GM12878 (cell line): ENCODE measurements at regions of chr17 and their contacts with region 1.

Region 1: DNA sequence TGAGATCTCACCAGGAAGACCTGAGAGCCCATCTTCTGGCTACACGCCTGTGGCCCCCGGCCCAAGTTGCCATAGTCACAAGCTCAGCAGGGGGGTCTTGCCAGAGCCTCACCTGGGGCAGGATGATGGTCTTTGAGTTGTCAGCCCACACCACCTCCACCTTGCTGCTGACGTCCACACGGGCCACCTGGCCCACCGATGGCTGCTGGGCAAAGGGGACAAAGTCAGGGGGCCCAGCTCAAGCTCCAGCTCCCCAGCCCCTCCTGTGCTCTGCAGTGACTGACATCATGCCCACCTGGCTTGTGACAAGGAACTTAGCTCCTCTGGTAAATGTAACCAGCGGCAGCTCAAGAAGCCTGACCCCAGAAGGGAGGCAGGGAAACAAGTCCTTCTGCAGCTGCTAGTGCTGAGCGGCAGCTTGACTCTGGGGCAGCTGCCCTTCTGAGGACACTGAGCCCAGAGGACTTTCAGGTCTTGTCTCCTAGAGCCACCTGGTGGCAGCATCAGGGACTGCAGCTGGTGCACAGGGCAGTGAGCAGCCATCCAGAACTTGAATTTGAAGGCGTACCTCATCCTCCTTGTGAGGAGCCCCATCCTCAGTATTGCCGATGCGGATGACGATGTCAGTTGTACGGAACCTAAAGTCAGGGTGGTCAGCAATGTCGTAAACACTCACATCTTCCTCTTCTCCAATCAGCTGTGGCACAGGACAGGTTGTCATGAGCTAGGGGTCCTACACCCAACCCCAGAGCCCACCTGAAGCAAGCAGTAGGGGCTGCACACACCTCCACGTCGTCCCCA is 13.5 kb downstream of the SPHK1 start:
- DNase-seq: peak; percentile 30
- ATAC-seq: peak; percentile 98
- H3K4me3 ChIP-seq: no peak overlapping the region
- H3K27ac ChIP-seq: no peak overlapping the region
- H3K4me1 ChIP-seq: no peaks in the 10 kb centered on the region
- H3K27me3 ChIP-seq: no peaks in the 10 kb centered on the region
- CTCF ChIP-seq: peak; percentile 96 to 98 (median 96); a peak in 5 of 6 replicates
- EP300 ChIP-seq: no peak
- POLR2A ChIP-seq: no peak; the same call in 1 of the 2 replicates
- RAD21 ChIP-seq: peak; percentile 76

Region 2: GRCh38 chr17:75689441-75689873 is 708.4 kb before region 1 on chr17:
- CTCF ChIA-PET with region 1: no interaction called
- POLR2A ChIA-PET with region 1: no interaction called
- RAD21 ChIA-PET with region 1: no interaction called
- SMC1A ChIA-PET with region 1: no interaction called
- in situ Hi-C with region 1: no loop called
- intact Hi-C with region 1: no loop called
- DNase-seq: peak; percentile 60
- ATAC-seq: peak; percentile 53
- H3K4me3 ChIP-seq: 0 out of 2 replicates have a peak overlapping the region, but pooled peaks have one; percentile 3
- H3K27ac ChIP-seq: peak overlapping the region; percentile 92
- H3K4me1 ChIP-seq: peaks cover 53% of the 10 kb centered on the region
- H3K27me3 ChIP-seq: no peaks in the 10 kb centered on the region
- CTCF ChIP-seq: no peak
- EP300 ChIP-seq: no peak
- POLR2A ChIP-seq: no peak
- RAD21 ChIP-seq: no peak

Region 3: GRCh38 chr17:76353599-76354316 is 44.1 kb before region 1 on chr17 and contains the start of gene PRPSAP1:
- CTCF ChIA-PET with region 1: interaction called, 11 read pairs
- POLR2A ChIA-PET with region 1: no interaction called
- RAD21 ChIA-PET with region 1: interaction called, 6 read pairs
- SMC1A ChIA-PET with region 1: interaction called, 8 read pairs
- in situ Hi-C with region 1: no loop called
- intact Hi-C with region 1: no loop called
- DNase-seq: peak; percentile 72
- ATAC-seq: peak; percentile 98
- H3K4me3 ChIP-seq: peak within 1 kb of the TSS; percentile 66
- H3K27ac ChIP-seq: peak within 1 kb of the TSS; percentile 91
- H3K4me1 ChIP-seq: peaks cover 13% of the 10 kb centered on the region
- H3K27me3 ChIP-seq: no peaks in the 10 kb centered on the region
- CTCF ChIP-seq: peak in 1 of 3 experiments; percentile 28; a peak in 1 of 6 replicates
- EP300 ChIP-seq: 0 out of 4 replicates have a peak, but pooled peaks of 1 of the 2 experiments have one; percentile 13
- POLR2A ChIP-seq: peak; percentile 99
- RAD21 ChIP-seq: no peak
- polyA plus RNA-seq, gene PRPSAP1: 26.9 to 34.7 TPM

Region 4: GRCh38 chr17:76384222-76384986 is 13.5 kb before region 1 on chr17 and contains the start of gene SPHK1:
- CTCF ChIA-PET with region 1: interaction called, 45 read pairs
- POLR2A ChIA-PET with region 1: interaction called, 4 read pairs
- RAD21 ChIA-PET with region 1: interaction called, 9 read pairs
- SMC1A ChIA-PET with region 1: interaction called, 6 read pairs
- in situ Hi-C with region 1: no loop called
- intact Hi-C with region 1: no loop called
- DNase-seq: no peak
- ATAC-seq: peak; percentile 88
- H3K4me3 ChIP-seq: peak within 1 kb of the TSS; percentile 75
- H3K27ac ChIP-seq: no peak within 1 kb of the TSS
- H3K4me1 ChIP-seq: peaks cover 24% of the 10 kb centered on the region
- H3K27me3 ChIP-seq: peaks cover 2 to 6% of the 10 kb centered on the region in 2 experiments; a peak in 2 of 4 replicates
- CTCF ChIP-seq: no peak
- EP300 ChIP-seq: no peak
- POLR2A ChIP-seq: no peak
- RAD21 ChIP-seq: no peak
- polyA plus RNA-seq, gene SPHK1: not detected

Region 5: DNA sequence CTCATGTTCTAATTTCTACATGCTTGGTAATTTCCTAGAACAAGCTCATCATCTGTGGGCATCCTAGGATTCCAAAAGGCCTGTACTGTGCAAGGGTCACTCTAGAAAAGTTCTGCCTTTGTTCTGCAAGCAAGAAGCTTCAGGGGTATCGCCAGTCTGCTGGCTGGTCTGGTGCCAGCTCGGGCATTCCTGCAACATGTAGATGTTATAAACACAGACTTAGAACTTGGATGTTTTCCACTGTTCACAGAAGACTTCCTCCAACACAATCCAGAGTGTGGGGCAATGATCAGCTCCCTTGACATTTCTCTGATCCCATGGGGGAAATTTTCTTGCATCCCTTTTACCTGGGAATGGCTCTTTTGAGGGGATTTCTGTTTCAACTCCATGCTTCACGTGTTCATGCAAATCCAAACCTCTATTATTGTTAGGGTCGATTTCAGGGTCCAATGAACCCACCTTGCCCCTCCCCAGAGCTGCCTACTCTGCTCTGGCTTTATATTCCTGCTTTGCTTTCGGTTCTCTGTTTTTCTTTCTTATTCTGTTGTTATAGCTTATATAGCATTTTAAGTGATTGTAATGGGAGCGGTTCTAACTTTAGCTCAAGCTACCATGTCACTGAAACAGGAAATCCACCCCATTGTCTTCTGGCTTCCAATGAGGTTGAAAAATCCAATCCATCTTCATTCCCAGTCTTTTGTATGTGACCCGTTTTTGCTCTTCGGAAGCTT is 29.8 kb after region 1 on chr17:
- CTCF ChIA-PET with region 1: interaction called, 20 read pairs
- POLR2A ChIA-PET with region 1: no interaction called
- RAD21 ChIA-PET with region 1: no interaction called
- SMC1A ChIA-PET with region 1: interaction called, 9 read pairs
- in situ Hi-C with region 1: no loop called
- intact Hi-C with region 1: no loop called
- DNase-seq: no peak
- ATAC-seq: peak; percentile 86
- H3K4me3 ChIP-seq: no peak overlapping the region
- H3K27ac ChIP-seq: peak overlapping the region; percentile 4; the same call in 1 of the 2 replicates
- H3K4me1 ChIP-seq: peaks cover 24% of the 10 kb centered on the region
- H3K27me3 ChIP-seq: no peaks in the 10 kb centered on the region
- CTCF ChIP-seq: no peak
- EP300 ChIP-seq: no peak
- POLR2A ChIP-seq: no peak
- RAD21 ChIP-seq: no peak

Region 6: DNA sequence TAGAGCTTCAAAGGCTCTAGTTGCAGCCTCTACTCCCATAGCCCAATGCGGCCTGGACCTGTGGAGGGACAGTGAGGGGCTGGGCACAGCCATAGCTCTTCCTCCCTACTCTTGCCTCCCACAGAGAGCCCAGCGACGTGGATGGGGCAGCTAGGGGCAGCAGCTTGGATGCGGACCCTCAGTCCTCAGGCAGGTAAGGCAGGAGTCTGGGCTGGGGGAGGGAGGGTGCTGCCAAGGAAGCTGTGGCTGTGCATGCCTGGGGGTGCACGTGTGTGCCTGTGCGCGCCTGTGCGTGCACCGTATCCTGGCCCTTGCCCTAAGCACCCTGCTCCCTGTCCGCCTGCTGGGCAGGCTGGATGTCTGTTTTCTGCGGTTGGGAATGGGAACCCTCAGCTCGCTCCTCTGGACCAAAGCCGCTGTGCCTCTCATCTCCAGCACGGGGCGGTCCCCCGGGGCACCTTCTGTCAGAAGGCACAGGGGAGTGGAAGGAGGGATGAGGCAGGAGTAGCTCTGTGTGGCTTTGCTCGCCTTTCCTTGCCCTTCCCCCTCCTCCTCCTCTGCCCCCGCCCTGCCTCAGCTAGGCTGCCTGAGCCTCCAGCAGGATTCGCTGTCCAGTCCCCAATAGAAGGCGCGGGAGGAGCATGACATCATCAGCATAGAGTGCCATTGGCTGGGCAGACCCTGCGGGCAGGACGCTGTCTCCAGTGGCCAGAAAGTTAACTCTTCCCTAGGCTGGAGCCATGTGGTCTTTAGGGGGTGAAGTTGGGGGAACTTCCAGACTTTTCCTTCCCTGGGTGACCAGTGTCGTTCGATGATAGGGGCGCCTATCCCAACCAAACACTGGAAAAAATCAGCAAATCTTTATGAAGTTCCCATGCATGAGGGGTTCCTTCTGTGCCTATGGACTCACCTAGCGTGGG is 142.8 kb after region 1 on chr17:
- CTCF ChIA-PET with region 1: no interaction called
- POLR2A ChIA-PET with region 1: no interaction called
- RAD21 ChIA-PET with region 1: no interaction called
- SMC1A ChIA-PET with region 1: no interaction called
- in situ Hi-C with region 1: no loop called
- intact Hi-C with region 1: no loop called
- DNase-seq: no peak
- ATAC-seq: peak; percentile 92
- H3K4me3 ChIP-seq: no peak overlapping the region
- H3K27ac ChIP-seq: no peak overlapping the region
- H3K4me1 ChIP-seq: no peaks in the 10 kb centered on the region
- H3K27me3 ChIP-seq: peaks cover 5 to 9% of the 10 kb centered on the region in 2 experiments
- CTCF ChIP-seq: no peak
- EP300 ChIP-seq: no peak
- POLR2A ChIP-seq: no peak
- RAD21 ChIP-seq: no peak